Adrenal gland (tissue), 19 donors: ENCODE measurements at regions of chr6 and their contacts with region 1.

Region 1: GRCh38 chr6:131532580-131533039 is 40.4 kb upstream of the ARG1 start:
- DNase-seq: peak in 3 of 7 donors; percentile 10 to 26 (median 25)
- H3K4me3 ChIP-seq: no peak overlapping the region
- H3K27ac ChIP-seq: no peak overlapping the region
- H3K4me1 ChIP-seq: no peaks in the 10 kb centered on the region
- H3K27me3 ChIP-seq: no peaks in the 10 kb centered on the region
- CTCF ChIP-seq: no peak
- POLR2A ChIP-seq: no peak

Region 2: DNA sequence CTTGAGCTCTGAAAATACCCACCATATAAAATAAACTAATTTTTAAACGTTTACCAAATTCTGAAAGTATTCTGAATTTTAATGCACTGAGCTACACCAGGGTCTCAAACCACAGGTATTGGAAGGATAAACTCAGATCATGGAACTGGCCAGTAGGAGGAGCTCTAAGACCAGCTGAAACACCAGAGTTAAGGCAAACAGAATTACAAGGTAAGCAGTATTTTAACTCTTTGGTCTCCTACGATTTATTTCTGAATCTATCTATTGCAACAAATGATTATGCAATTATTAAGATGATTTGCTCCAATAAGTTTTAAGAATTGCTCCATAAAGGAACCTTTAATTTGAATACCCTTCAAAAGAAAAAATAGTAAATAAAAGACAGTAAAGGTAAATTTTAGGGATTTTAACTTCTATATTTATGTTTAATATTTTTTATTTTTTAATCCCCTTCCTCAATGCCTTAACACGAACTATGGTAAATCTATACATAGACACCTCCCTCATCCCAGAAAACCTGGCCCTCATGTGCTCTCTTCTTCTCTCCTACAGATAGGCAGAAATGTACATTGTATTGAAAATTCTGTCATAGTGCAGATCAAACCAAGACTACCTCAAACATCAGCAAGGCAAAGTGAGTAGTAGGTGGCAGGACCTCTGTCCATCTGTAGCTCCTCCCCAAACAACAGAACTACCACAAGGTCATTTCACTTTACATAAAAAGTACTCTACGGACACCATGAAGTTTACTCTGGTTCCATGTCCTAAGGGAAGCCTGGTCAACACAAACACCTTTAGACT is 647.0 kb before region 1 on chr6:
- intact Hi-C with region 1: loop called in 1 of 2 experiments (anchors 10 kb)
- DNase-seq: peak; percentile 60 to 90 (median 78)
- H3K4me3 ChIP-seq: no peak overlapping the region
- H3K27ac ChIP-seq: no peak overlapping the region
- H3K4me1 ChIP-seq: peaks cover 0 to under 1% of the 10 kb centered on the region in 2 donors
- H3K27me3 ChIP-seq: no peaks in the 10 kb centered on the region
- CTCF ChIP-seq: peak; percentile 82 to 98 (median 94)
- POLR2A ChIP-seq: no peak

Region 3: GRCh38 chr6:131182991-131183425 is 349.6 kb before region 1 on chr6:
- intact Hi-C with region 1: loop called in 1 of 2 experiments (anchors 10 kb)
- DNase-seq: peak in 2 of 7 donors; percentile 32 to 59
- H3K4me3 ChIP-seq: no peak overlapping the region
- H3K27ac ChIP-seq: peak overlapping the region in 1 of 5 donors; percentile 2
- H3K4me1 ChIP-seq: peaks cover 0 to 19% of the 10 kb centered on the region in 2 donors
- H3K27me3 ChIP-seq: no peaks in the 10 kb centered on the region
- CTCF ChIP-seq: peak; percentile 30 to 71 (median 56)
- POLR2A ChIP-seq: no peak

Region 4: DNA sequence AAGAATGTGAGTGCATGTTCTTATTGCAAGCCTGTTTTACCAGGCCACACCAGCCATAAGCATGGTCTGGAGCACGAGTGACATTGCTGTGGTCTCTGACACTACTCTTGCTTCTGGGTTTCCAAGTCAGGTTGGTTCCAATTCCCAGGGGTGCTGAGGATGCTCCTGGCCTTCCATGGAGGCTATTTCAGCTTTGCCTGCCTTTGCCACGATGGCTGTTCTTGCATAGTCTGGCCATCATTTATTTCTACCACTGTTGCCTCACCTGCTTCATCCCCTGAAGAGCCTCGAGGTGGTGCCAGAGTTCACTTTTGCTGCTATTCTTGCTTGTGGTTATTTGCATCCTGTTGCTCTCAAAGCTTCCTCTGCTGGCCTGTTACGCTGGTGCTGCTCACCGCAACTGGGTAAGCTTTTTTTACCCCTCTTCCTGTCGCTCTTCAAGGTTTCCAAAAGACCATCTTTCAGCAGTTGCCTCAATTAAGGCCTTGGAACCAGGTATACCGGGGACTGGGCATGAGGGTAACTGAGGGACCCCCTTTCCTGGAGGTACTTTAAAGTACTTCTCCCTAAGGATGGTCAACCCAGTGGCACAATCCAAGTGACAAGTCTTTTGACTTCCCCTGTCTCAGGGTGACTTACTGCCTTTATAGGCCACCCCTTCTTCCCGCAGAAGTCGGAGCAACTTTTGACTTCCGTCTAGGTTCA is 332.9 kb before region 1 on chr6:
- intact Hi-C with region 1: loop called in 1 of 2 experiments (anchors 10 kb)
- DNase-seq: peak in 4 of 7 donors; percentile 23 to 75 (median 42)
- H3K4me3 ChIP-seq: no peak overlapping the region
- H3K27ac ChIP-seq: no peak overlapping the region
- H3K4me1 ChIP-seq: no peaks in the 10 kb centered on the region
- H3K27me3 ChIP-seq: no peaks in the 10 kb centered on the region
- CTCF ChIP-seq: peak; percentile 27 to 77 (median 54)
- POLR2A ChIP-seq: no peak